GM12878 (cell line): ENCODE measurements at regions of chr20 and their contacts with region 1.

Region 1: DNA sequence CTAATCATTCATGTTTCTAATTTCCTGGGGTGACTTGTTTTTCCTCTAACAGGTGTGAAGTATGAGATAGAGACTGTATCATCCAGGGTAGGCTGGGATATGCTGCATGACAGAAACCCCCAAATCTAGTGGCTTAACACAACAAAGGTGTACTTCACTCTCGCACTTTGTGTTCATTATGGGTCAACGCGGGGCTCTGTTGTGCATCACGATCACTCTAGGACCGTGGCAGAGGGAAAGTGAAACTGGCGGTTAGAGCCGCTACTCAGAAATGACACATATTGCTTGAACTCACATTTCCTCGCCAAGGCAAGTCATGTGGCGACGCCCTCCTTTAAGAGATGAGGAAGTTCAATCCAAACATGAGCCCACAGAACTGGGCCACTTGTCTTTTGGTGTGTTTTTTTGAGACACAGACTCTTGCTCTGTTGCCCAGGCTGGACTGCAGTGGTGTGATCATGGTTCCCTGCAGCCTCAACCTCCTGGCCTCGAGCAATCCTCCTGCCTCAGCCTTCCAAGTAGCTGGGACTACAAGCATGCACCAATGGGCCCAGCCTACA is 41.3 kb downstream of the PCNA start:
- DNase-seq: peak; percentile 98
- ATAC-seq: peak; percentile 81
- H3K4me3 ChIP-seq: no peak overlapping the region; the same call in 1 of the 2 replicates
- H3K27ac ChIP-seq: peak overlapping the region; percentile 68
- H3K4me1 ChIP-seq: peaks cover 47% of the 10 kb centered on the region
- H3K27me3 ChIP-seq: no peaks in the 10 kb centered on the region; a peak in 1 of 4 replicates
- CTCF ChIP-seq: no peak
- EP300 ChIP-seq: peak; percentile 93 to 98
- POLR2A ChIP-seq: peak; percentile 51
- RAD21 ChIP-seq: no peak

Region 2: DNA sequence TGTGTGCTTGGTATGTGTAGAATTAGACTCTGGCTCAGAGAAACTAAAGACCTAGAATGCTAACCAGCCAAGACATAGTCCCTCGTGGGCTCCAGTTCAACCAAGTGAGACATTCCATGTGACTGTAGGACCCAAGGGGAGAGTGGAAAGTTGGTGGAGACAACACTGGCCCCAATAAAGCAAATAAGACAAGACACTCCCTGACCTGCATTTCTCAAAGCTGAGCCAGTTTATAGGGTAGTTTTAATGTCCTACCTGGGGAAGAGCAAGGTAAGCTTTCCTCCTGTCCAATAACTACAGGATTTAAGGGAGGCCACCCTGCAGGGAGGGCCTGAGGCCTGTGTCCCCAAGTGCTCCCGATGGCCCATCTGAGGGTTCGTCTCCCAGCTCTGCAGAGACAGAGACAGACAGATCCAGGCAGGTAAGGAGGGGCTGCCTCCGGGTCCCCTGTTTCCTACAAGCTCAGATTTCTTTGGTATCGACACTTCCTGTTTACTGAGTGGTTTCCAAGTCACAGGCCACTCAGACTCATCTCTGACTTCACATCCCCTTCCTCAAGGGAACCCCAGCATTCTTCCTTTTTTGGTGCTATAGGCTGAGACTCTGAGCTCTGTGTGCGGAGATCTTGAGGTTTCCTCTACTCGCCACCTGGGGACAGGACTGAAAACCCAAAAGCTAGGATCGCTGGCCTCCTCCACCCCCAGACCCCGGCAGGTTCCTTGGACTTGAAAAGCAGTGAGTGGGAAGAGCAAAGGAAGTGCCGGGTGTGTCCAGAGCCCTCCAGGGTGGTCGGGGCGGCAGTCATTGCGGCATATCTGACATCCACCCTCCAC is 264.4 kb before region 1 on chr20:
- CTCF ChIA-PET with region 1: interaction called, 3 read pairs
- POLR2A ChIA-PET with region 1: interaction called, 3 read pairs
- RAD21 ChIA-PET with region 1: interaction called, 9 read pairs
- SMC1A ChIA-PET with region 1: interaction called, 5 read pairs
- in situ Hi-C with region 1: loop called (anchors 5 kb)
- intact Hi-C with region 1: no loop called
- DNase-seq: peak; percentile 91
- ATAC-seq: peak; percentile 63
- H3K4me3 ChIP-seq: peak overlapping the region; percentile 71
- H3K27ac ChIP-seq: peak overlapping the region; percentile 98
- H3K4me1 ChIP-seq: peaks cover 66% of the 10 kb centered on the region
- H3K27me3 ChIP-seq: no peaks in the 10 kb centered on the region
- CTCF ChIP-seq: peak in 2 of 3 experiments; percentile 1 to 10; a peak in 1 of 6 replicates
- EP300 ChIP-seq: peak in 1 of 2 experiments; percentile 62; a peak in 2 of 4 replicates
- POLR2A ChIP-seq: no peak; the same call in 1 of the 2 replicates
- RAD21 ChIP-seq: no peak

Region 3: DNA sequence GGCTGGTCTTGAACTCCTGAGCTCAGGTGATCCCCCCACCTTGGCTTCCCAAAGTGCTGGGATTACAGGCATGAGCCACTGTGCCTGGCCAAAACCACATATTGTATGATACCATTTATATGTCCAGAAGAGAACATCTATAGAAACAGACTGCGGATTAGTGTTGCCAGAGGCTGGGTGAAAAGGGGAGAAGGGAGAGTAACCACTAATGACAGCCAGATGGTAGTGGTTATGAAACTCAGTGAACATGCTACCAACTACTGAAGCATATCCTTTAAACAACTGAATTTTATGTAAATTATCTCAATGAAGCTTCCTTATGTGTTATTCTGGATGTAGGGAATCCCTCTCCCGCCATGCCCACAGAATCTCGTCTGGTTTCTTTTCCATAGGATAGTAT is 92.8 kb before region 1 on chr20:
- CTCF ChIA-PET with region 1: no interaction called
- POLR2A ChIA-PET with region 1: interaction called, 3 read pairs
- RAD21 ChIA-PET with region 1: interaction called, 5 read pairs
- SMC1A ChIA-PET with region 1: interaction called, 6 read pairs
- in situ Hi-C with region 1: no loop called
- intact Hi-C with region 1: loop called (anchors 5 kb)
- DNase-seq: peak; percentile 24
- ATAC-seq: peak; percentile 77
- H3K4me3 ChIP-seq: peak overlapping the region; percentile 13; the same call in 1 of the 2 replicates
- H3K27ac ChIP-seq: peak overlapping the region; percentile 11; the same call in 1 of the 2 replicates
- H3K4me1 ChIP-seq: peaks cover 25% of the 10 kb centered on the region
- H3K27me3 ChIP-seq: no peaks in the 10 kb centered on the region
- CTCF ChIP-seq: no peak
- EP300 ChIP-seq: no peak
- POLR2A ChIP-seq: no peak
- RAD21 ChIP-seq: no peak

Region 4: DNA sequence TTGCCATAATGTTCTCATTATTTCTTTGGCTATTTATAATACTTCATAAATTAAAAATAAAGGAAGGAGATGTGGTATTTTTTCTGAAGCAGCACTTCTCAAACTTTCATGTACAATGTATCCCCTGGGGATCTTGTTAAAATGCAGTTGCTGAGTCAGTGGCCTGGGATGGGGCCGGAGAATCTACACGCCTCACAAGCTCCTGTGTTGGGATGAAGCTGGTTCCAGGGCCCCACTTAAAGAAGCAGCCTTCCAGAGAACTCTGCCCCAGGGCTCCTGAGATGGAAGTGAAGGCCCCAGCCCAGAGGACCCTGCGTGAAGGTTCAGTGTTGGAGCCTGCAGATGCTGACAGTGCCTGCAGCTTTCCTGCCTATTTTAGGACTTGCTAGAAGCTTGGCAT is 37.0 kb before region 1 on chr20:
- CTCF ChIA-PET with region 1: interaction called, 6 read pairs
- POLR2A ChIA-PET with region 1: interaction called, 27 read pairs
- RAD21 ChIA-PET with region 1: interaction called, 15 read pairs
- SMC1A ChIA-PET with region 1: interaction called, 83 read pairs
- in situ Hi-C with region 1: no loop called
- intact Hi-C with region 1: loop called (anchors 2 kb)
- DNase-seq: no peak
- ATAC-seq: no peak
- H3K4me3 ChIP-seq: no peak overlapping the region
- H3K27ac ChIP-seq: no peak overlapping the region
- H3K4me1 ChIP-seq: peaks cover 3% of the 10 kb centered on the region; the same call in 1 of the 2 replicates
- H3K27me3 ChIP-seq: no peaks in the 10 kb centered on the region; a peak in 1 of 4 replicates
- CTCF ChIP-seq: no peak
- EP300 ChIP-seq: no peak
- POLR2A ChIP-seq: no peak
- RAD21 ChIP-seq: no peak

Region 5: DNA sequence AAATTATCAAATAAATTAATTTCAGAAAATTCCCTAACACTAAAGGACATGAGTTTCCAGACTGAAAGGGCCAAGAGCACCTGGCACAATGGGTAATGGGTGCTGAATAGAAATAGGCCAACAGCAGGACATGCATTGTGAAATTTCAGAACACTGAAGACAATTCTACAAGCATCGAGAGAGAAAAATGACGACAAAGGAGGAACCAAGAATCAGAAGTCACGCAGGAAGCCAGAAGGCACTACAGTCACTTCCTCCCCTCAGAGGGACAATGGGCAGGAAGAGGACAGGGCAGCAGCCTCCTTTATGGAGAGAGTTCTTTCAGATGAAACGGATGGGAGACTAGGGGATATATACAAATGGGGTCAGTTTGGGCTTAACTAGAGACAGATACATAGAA is 11.7 kb after region 1 on chr20:
- CTCF ChIA-PET with region 1: interaction called, 8 read pairs
- POLR2A ChIA-PET with region 1: interaction called, 49 read pairs
- RAD21 ChIA-PET with region 1: interaction called, 10 read pairs
- SMC1A ChIA-PET with region 1: interaction called, 26 read pairs
- in situ Hi-C with region 1: no loop called
- intact Hi-C with region 1: no loop called
- DNase-seq: no peak
- ATAC-seq: peak; percentile 93
- H3K4me3 ChIP-seq: no peak overlapping the region
- H3K27ac ChIP-seq: no peak overlapping the region
- H3K4me1 ChIP-seq: no peaks in the 10 kb centered on the region
- H3K27me3 ChIP-seq: no peaks in the 10 kb centered on the region
- CTCF ChIP-seq: no peak
- EP300 ChIP-seq: peak; percentile 64 to 72; a peak in 2 of 4 replicates
- POLR2A ChIP-seq: no peak
- RAD21 ChIP-seq: no peak

Region 6: DNA sequence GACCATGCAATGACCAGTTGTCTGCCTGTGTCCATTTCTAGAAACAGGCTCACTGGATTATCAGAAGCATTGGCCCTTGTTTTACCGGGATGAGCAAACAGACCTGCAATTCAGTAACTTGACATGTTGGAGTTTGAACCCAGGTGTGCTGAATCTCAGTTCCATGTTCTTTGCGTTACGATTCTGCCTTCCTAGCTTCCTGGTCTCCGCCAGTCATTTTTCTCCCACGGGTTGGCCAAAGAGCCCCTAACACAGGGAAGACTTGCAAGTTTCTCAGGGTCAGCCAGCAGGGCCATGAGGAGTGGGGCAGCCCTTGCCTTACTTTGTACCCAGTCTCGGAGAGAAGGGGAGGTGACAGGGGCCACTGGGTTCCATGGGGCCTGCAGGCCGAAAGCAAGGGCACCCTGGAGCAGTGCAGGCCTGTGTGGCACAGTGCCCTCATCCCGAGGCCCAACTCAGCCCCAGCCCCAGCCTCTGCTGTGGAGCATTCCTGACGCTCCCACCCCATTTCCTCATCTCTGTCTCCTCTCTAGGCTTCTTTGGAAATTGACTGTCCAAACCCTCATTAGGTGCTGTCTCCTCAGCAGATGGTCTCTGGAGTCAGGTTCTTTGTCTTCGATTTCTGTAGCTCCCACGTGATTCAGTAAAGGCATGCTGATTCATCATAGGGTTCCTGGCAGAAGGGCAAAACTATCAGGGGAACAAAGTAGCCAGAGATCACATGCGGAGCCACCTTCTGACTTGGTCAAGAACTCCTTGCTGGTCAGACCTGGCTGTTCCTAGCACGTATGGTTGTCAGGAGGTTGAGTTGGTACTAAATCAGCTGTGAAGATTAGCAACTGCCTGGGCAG is 72.0 kb after region 1 on chr20:
- CTCF ChIA-PET with region 1: no interaction called
- POLR2A ChIA-PET with region 1: no interaction called
- RAD21 ChIA-PET with region 1: no interaction called
- SMC1A ChIA-PET with region 1: no interaction called
- in situ Hi-C with region 1: no loop called
- intact Hi-C with region 1: no loop called
- DNase-seq: no peak
- ATAC-seq: no peak
- H3K4me3 ChIP-seq: no peak overlapping the region
- H3K27ac ChIP-seq: no peak overlapping the region
- H3K4me1 ChIP-seq: peaks cover 14% of the 10 kb centered on the region
- H3K27me3 ChIP-seq: no peaks in the 10 kb centered on the region
- CTCF ChIP-seq: no peak
- EP300 ChIP-seq: no peak
- POLR2A ChIP-seq: no peak
- RAD21 ChIP-seq: no peak

Region 7: GRCh38 chr20:5191829-5192569 is 113.5 kb after region 1 on chr20:
- CTCF ChIA-PET with region 1: no interaction called
- POLR2A ChIA-PET with region 1: no interaction called
- RAD21 ChIA-PET with region 1: no interaction called
- SMC1A ChIA-PET with region 1: no interaction called
- in situ Hi-C with region 1: no loop called
- intact Hi-C with region 1: no loop called
- DNase-seq: peak; percentile 61
- ATAC-seq: peak; percentile 79
- H3K4me3 ChIP-seq: peak overlapping the region; percentile 8; the same call in 1 of the 2 replicates
- H3K27ac ChIP-seq: peak overlapping the region; percentile 16
- H3K4me1 ChIP-seq: peaks cover 34% of the 10 kb centered on the region
- H3K27me3 ChIP-seq: no peaks in the 10 kb centered on the region
- CTCF ChIP-seq: peak; percentile 67 to 82 (median 80)
- EP300 ChIP-seq: no peak
- POLR2A ChIP-seq: no peak
- RAD21 ChIP-seq: peak; percentile 93